ENCODE measurements at regions of chr7 and their contacts with region 1.

Region 1: GRCh38 chr7:106176414-106177299 is 64.5 kb upstream of the SYPL1 start:
- DNase-seq: peak; percentile 84
- H3K4me3 Mint-ChIP-seq: no peak overlapping the region
- H3K27ac Mint-ChIP-seq: peak overlapping the region; percentile 9
- H3K4me1 Mint-ChIP-seq: peaks cover 11% of the 10 kb centered on the region
- H3K27me3 Mint-ChIP-seq: peaks cover 12% of the 10 kb centered on the region

Region 2: GRCh38 chr7:106309362-106309761 is 132.7 kb after region 1 on chr7:
- CTCF ChIA-PET with region 1: no interaction called
- intact Hi-C with region 1: loop called (anchors 1 kb)
- DNase-seq: peak; percentile 66
- H3K4me3 Mint-ChIP-seq: no peak overlapping the region
- H3K27ac Mint-ChIP-seq: no peak overlapping the region
- H3K4me1 Mint-ChIP-seq: peaks cover 24% of the 10 kb centered on the region
- H3K27me3 Mint-ChIP-seq: peaks cover 11% of the 10 kb centered on the region

Region 3: DNA sequence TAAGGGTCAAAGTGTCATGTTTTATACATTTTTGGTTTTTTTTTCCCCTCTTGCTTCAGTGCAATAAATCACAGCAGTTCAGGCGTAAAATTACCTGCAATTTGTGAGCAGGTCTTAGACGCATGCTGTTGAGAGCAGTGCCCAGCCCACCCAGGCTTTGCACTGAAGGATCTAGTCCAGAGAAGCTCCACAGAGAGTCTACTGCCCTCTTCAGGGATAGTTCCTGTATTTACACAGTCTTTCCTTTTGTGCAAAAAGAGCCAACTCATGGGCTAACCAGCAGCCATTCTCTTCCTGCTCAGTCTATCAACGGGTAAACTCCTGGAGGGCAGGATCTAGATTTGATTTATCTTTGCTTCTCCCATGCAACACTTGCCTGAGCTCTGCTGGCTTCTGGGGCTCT is 190.4 kb after region 1 on chr7:
- CTCF ChIA-PET with region 1: interaction called, 3 read pairs
- intact Hi-C with region 1: loop called (anchors 1 kb)
- DNase-seq: no peak
- H3K4me3 Mint-ChIP-seq: no peak overlapping the region
- H3K27ac Mint-ChIP-seq: peak overlapping the region; percentile 70
- H3K4me1 Mint-ChIP-seq: peaks cover 44% of the 10 kb centered on the region
- H3K27me3 Mint-ChIP-seq: peaks cover 23% of the 10 kb centered on the region

Region 4: DNA sequence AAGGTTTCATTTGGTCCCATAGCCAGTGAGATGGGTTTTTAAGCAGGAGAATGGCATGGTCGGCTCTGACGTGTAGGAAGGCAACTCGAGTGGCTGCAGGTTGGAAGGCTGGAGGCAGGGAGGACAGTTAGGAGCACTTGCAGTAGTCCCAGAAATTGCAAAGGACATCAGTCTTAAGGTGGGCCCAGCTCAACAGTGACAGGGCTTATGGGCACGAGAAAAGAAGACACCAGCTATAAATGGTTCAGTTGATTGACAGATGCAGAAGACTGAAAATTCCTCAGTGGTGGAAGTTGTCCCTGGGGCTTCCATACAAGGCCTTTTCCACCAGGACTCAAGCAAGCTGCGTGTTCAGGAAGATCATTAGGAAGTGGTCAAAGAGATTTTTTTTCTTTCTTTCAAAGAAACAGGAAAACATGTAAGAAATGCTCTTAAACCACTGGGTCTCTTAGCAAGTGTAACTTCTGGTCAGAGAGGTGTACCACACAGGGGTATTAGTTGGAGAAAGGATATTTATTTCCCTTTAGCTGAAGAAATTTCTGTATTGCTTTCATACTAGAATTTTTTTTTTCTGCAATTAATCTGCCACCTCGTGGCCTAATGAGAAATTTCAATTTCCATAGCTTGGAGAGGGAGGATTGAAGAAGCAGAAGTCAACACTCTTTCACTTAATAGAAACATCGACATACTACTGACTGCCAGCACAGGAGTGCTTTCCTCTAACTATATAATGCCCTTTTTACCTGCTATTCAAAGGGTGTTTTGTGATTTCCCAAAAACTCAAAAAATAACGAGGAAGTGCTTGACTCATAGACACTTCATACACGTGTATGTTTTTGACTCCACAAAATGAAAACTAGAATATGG is 285.6 kb after region 1 on chr7:
- CTCF ChIA-PET with region 1: interaction called, 95 read pairs
- intact Hi-C with region 1: loop called (anchors 1 kb)
- DNase-seq: peak; percentile 29
- H3K4me3 Mint-ChIP-seq: no peak overlapping the region
- H3K27ac Mint-ChIP-seq: peak overlapping the region; percentile 50
- H3K4me1 Mint-ChIP-seq: peaks cover 29% of the 10 kb centered on the region
- H3K27me3 Mint-ChIP-seq: no peaks in the 10 kb centered on the region

Region 5: GRCh38 chr7:106520962-106521940 is 344.6 kb after region 1 on chr7:
- CTCF ChIA-PET with region 1: interaction called, 5 read pairs
- intact Hi-C with region 1: loop called (anchors 1 kb)
- DNase-seq: peak; percentile 37
- H3K4me3 Mint-ChIP-seq: no peak overlapping the region
- H3K27ac Mint-ChIP-seq: no peak overlapping the region
- H3K4me1 Mint-ChIP-seq: peaks cover 16% of the 10 kb centered on the region
- H3K27me3 Mint-ChIP-seq: peaks cover 26% of the 10 kb centered on the region

Region 6: DNA sequence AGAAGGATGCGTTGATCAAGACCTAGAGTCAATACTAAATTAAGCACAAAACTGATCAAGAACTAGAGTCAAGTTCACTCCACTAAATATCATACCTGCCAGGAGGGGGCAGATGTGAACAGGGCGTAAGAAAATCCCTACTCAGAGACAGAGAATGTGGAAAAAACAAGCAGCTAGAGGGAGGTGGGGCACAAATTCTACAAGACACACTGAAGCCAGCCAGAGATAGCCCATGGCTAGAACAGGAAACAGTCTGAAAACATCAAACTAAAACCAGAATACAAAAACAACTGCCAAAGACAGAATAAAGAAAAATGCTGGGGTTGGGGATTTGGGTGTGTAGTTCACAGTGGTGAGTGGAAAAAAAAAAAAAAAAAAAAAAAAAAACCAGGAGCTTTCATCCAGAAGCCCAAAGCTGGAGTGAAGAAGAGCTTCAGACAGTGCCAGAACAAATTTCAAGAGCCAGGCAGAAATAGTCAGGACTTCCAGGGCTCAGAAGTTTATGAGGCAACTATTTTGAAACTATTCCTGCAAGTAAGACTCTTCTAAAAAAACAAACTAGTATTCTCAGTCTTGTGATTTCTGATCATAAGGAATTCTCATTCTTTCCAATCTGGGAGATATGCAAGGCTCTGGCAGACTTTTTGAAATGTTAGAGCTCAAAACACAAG is 366.0 kb after region 1 on chr7:
- CTCF ChIA-PET with region 1: interaction called, 16 read pairs
- intact Hi-C with region 1: loop called (anchors 1 kb)
- DNase-seq: peak; percentile 76
- H3K4me3 Mint-ChIP-seq: no peak overlapping the region
- H3K27ac Mint-ChIP-seq: no peak overlapping the region
- H3K4me1 Mint-ChIP-seq: peaks cover 8% of the 10 kb centered on the region
- H3K27me3 Mint-ChIP-seq: no peaks in the 10 kb centered on the region

Region 7: DNA sequence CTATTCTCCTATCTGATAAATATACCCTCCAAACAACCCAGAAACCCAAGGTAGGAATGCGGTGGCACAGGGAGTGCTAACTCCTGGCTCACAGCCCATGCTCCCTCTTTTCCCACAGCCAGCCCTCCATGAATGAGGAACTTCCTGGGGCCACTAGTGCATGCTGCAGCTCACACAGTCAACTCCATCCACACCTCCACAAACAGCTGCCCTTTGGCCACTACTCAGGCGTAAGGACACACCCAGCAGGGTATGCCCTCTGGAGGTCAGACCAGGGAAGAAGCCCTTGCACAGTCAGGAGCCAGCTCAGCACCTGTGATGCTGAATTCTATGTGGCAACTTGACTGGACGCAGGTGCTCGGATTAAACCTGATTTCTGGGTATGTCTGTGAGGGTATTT is 603.2 kb after region 1 on chr7:
- CTCF ChIA-PET with region 1: interaction called, 4 read pairs
- intact Hi-C with region 1: loop called (anchors 5 kb)
- DNase-seq: peak; percentile 26
- H3K4me3 Mint-ChIP-seq: no peak overlapping the region
- H3K27ac Mint-ChIP-seq: no peak overlapping the region
- H3K4me1 Mint-ChIP-seq: peaks cover 2% of the 10 kb centered on the region
- H3K27me3 Mint-ChIP-seq: no peaks in the 10 kb centered on the region

Measured in activated naive CD4-positive, alpha-beta T cell treated with anti-CD3 and anti-CD28 coated beads for 36 hours (primary cell).